Sigmoid colon (tissue), 7 donors: ENCODE measurements at regions of chr14 and their contacts with region 1.

Region 1: GRCh38 chr14:23352511-23353432 is at the start of gene SLC22A17:
- DNase-seq: peak; percentile 94
- H3K4me3 ChIP-seq: peak within 1 kb of the TSS; percentile 48 to 70 (median 69)
- H3K27ac ChIP-seq: peak within 1 kb of the TSS; percentile 68 to 84 (median 72)
- H3K4me1 ChIP-seq: peaks cover 0 to 18% (median 15%) of the 10 kb centered on the region in 4 donors
- H3K27me3 ChIP-seq: peaks cover 0 to 4% (median 3%) of the 10 kb centered on the region in 3 donors
- CTCF ChIP-seq: no peak
- EP300 ChIP-seq: no peak
- POLR2A ChIP-seq: peak; percentile 50 to 70
- total RNA-seq, gene SLC22A17: 18.1 to 38.8 (median 26.3) TPM

Region 2: DNA sequence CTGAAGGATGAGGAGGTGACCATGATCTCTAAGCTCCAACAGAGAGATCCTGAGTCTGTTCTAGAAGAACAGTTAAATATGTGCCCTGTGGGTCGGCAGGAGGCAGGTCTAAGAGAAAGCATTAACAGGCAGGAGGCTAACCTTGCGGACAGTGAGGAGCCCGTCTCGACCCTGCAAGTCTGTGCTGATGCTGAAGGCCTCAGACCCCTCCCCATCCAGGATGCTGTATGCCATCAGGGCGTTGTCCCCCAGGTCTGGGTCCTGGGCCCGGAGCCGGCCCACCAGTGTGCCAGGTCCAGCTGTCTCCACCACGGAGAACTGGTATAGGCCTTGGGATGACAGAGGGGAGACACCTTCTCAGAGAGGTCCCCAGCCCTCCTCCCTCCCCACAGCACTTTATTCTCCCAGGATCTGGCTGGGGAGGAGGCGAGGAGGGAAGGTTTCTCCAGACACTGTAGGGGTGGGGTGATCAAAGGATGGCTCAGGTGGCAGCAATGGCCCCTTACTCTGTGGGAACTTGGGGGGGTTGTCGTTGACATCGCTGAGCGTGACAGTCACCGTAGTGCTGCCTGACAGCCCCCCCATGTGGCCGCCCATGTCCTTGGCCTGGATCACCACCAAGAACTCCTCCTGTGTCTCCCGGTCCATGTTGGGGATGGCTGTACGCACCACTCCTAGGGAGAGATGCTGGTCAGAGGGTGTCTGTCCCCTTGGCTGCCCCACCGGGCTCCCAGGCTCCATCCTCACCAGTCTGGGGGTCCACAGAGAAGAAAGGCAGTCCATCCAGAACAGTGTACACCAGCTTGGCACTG is 298.6 kb before region 1 on chr14:
- intact Hi-C with region 1: no loop called
- DNase-seq: no peak
- H3K4me3 ChIP-seq: no peak overlapping the region
- H3K27ac ChIP-seq: no peak overlapping the region
- H3K4me1 ChIP-seq: peaks cover 0 to 27% (median 20%) of the 10 kb centered on the region in 4 donors
- H3K27me3 ChIP-seq: no peaks in the 10 kb centered on the region
- CTCF ChIP-seq: no peak
- EP300 ChIP-seq: no peak
- POLR2A ChIP-seq: no peak

Region 3: DNA sequence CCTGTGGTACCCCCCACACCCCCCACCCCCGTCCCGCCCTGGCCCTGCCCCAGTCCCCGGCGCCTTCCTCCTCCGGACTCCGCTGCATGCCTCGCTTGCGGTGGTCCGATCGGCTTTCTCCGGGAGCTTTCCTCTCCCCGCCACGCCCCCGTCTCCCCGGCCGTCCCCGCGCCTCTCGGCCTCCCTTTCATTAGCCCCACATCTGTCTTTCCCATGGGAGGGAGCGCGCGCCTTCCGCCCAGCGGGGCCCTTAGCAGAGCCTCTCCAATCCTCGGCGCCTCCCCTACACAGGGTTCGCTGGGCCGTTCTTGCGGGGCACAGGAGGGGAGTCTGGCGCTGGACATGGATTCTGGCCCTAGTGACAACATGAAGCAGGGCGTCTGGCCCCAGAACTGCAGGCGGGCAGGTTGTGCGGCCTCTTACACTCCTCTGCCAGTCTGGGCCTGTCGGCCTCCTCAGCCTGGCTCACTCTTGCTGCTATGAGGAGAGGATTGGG is 13.7 kb after region 1 on chr14:
- intact Hi-C with region 1: loop called (anchors 2 kb)
- DNase-seq: peak; percentile 90
- H3K4me3 ChIP-seq: peak overlapping the region; percentile 42 to 75 (median 65)
- H3K27ac ChIP-seq: peak overlapping the region; percentile 92 to 98 (median 94)
- H3K4me1 ChIP-seq: peaks cover 0 to 53% (median 32%) of the 10 kb centered on the region in 4 donors
- H3K27me3 ChIP-seq: no peaks in the 10 kb centered on the region
- CTCF ChIP-seq: no peak
- EP300 ChIP-seq: no peak
- POLR2A ChIP-seq: no peak

Region 4: GRCh38 chr14:23379366-23380196 is 26.8 kb after region 1 on chr14:
- intact Hi-C with region 1: no loop called
- DNase-seq: no peak
- H3K4me3 ChIP-seq: no peak overlapping the region
- H3K27ac ChIP-seq: no peak overlapping the region
- H3K4me1 ChIP-seq: no peaks in the 10 kb centered on the region
- H3K27me3 ChIP-seq: no peaks in the 10 kb centered on the region
- CTCF ChIP-seq: peak; percentile 86 to 93 (median 91)
- EP300 ChIP-seq: no peak
- POLR2A ChIP-seq: no peak

Region 5: GRCh38 chr14:23392613-23393012 is 39.8 kb after region 1 on chr14:
- intact Hi-C with region 1: no loop called
- DNase-seq: no peak
- H3K4me3 ChIP-seq: no peak overlapping the region
- H3K27ac ChIP-seq: no peak overlapping the region
- H3K4me1 ChIP-seq: no peaks in the 10 kb centered on the region
- H3K27me3 ChIP-seq: no peaks in the 10 kb centered on the region
- CTCF ChIP-seq: no peak
- EP300 ChIP-seq: no peak
- POLR2A ChIP-seq: no peak

Region 6: DNA sequence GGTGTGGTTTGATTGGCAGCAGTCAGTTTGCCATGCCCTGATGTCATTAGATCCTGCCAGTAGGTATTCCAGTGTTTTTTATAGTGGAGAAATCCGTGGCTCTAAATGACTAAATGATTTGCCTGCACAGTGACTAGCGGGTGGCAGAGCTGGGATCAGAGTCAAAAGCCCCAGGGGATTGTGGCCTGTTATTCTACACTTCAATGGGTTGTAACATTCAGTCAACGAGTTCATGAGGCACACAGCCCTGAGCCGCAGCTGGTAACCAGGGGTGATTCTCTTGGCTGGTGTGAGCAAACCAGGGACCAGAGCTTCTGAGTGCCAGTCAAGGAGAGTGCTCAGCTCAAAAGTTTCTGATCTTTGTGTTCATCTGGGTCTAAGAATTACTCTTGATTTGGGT is 53.5 kb after region 1 on chr14:
- intact Hi-C with region 1: no loop called
- DNase-seq: no peak
- H3K4me3 ChIP-seq: no peak overlapping the region
- H3K27ac ChIP-seq: no peak overlapping the region
- H3K4me1 ChIP-seq: no peaks in the 10 kb centered on the region
- H3K27me3 ChIP-seq: peaks cover 0 to 5% (median 0%) of the 10 kb centered on the region in 3 donors
- CTCF ChIP-seq: no peak
- EP300 ChIP-seq: no peak
- POLR2A ChIP-seq: no peak